CD4-positive, alpha-beta memory T cell (primary cell): ENCODE measurements at regions of chr14 and their contacts with region 1.

Region 1: GRCh38 chr14:61280526-61281185 is 482 bp downstream of the TMEM30B start:
- DNase-seq: peak; percentile 73 to 81 (median 78)
- H3K4me3 ChIP-seq: peak overlapping the region; percentile 45 to 76
- H3K4me3 Mint-ChIP-seq: peak overlapping the region; percentile 90 to 95 (median 93)
- H3K27ac ChIP-seq: peak overlapping the region; percentile 65
- H3K27ac Mint-ChIP-seq: peak overlapping the region; percentile 87 to 96 (median 94)
- H3K4me1 ChIP-seq: peaks cover 16% of the 10 kb centered on the region
- H3K4me1 Mint-ChIP-seq: peaks cover 19 to 38% (median 24%) of the 10 kb centered on the region in 4 donors
- H3K27me3 ChIP-seq: no peaks in the 10 kb centered on the region
- H3K27me3 Mint-ChIP-seq: no peaks in the 10 kb centered on the region

Region 2: GRCh38 chr14:61154641-61155040 is 126.0 kb before region 1 on chr14:
- CTCF ChIA-PET with region 1: no interaction called
- POLR2A ChIA-PET with region 1: no interaction called
- intact Hi-C with region 1: no loop called
- DNase-seq: no peak
- H3K4me3 ChIP-seq: no peak overlapping the region
- H3K4me3 Mint-ChIP-seq: no peak overlapping the region
- H3K27ac ChIP-seq: no peak overlapping the region
- H3K27ac Mint-ChIP-seq: no peak overlapping the region
- H3K4me1 ChIP-seq: no peaks in the 10 kb centered on the region
- H3K4me1 Mint-ChIP-seq: no peaks in the 10 kb centered on the region
- H3K27me3 ChIP-seq: no peaks in the 10 kb centered on the region
- H3K27me3 Mint-ChIP-seq: peaks cover 5 to 12% of the 10 kb centered on the region in 2 donors

Region 3: GRCh38 chr14:61269321-61270083 is 11.2 kb before region 1 on chr14:
- CTCF ChIA-PET with region 1: interaction called, 152 read pairs
- POLR2A ChIA-PET with region 1: interaction called, 6 read pairs
- intact Hi-C with region 1: loop called (anchors 1 kb)
- DNase-seq: peak; percentile 71 to 77 (median 74)
- H3K4me3 ChIP-seq: peak overlapping the region in 1 of 2 donors; percentile 29
- H3K4me3 Mint-ChIP-seq: peak overlapping the region in 7 of 8 donors; percentile 58 to 83 (median 79)
- H3K27ac ChIP-seq: no peak overlapping the region
- H3K27ac Mint-ChIP-seq: no peak overlapping the region
- H3K4me1 ChIP-seq: peaks cover 5% of the 10 kb centered on the region
- H3K4me1 Mint-ChIP-seq: peaks cover 0 to 7% (median 2%) of the 10 kb centered on the region in 4 donors
- H3K27me3 ChIP-seq: peaks cover 5% of the 10 kb centered on the region
- H3K27me3 Mint-ChIP-seq: peaks cover 24 to 30% of the 10 kb centered on the region in 2 donors

Region 4: DNA sequence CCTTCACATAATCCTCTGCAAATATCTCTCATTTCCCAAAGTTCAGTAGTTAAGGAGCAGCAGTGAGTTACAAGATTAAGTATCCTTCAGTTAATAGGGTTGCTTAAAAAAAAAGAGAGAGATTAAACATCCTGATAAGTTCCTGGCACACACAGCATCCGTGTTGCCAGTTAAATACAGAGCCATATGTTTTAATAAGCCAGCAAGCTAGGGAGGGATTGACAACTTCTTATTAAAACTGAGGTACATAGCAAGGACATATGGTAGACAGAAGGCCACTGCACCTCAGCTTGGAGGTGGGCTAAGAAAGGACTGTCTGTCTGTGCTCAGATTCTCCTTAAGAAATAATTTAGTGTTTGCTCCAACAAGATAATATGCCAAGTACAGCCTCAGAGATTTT is 10.0 kb after region 1 on chr14:
- CTCF ChIA-PET with region 1: interaction called, 36 read pairs
- POLR2A ChIA-PET with region 1: interaction called, 6 read pairs
- intact Hi-C with region 1: no loop called
- DNase-seq: no peak
- H3K4me3 ChIP-seq: no peak overlapping the region
- H3K4me3 Mint-ChIP-seq: no peak overlapping the region
- H3K27ac ChIP-seq: no peak overlapping the region
- H3K27ac Mint-ChIP-seq: no peak overlapping the region
- H3K4me1 ChIP-seq: peaks cover 7% of the 10 kb centered on the region
- H3K4me1 Mint-ChIP-seq: peaks cover 3 to 7% (median 5%) of the 10 kb centered on the region in 4 donors
- H3K27me3 ChIP-seq: no peaks in the 10 kb centered on the region
- H3K27me3 Mint-ChIP-seq: no peaks in the 10 kb centered on the region

Region 5: GRCh38 chr14:61335671-61336275 is 55.1 kb after region 1 on chr14:
- CTCF ChIA-PET with region 1: interaction called, 4 read pairs
- POLR2A ChIA-PET with region 1: interaction called, 11 read pairs
- intact Hi-C with region 1: no loop called
- DNase-seq: peak; percentile 65 to 78 (median 73)
- H3K4me3 ChIP-seq: peak overlapping the region; percentile 2 to 25
- H3K4me3 Mint-ChIP-seq: peak overlapping the region; percentile 78 to 87 (median 84)
- H3K27ac ChIP-seq: peak overlapping the region; percentile 84
- H3K27ac Mint-ChIP-seq: peak overlapping the region; percentile 93 to 100 (median 99)
- H3K4me1 ChIP-seq: peaks cover 94% of the 10 kb centered on the region
- H3K4me1 Mint-ChIP-seq: peaks cover 70 to 85% (median 78%) of the 10 kb centered on the region in 4 donors
- H3K27me3 ChIP-seq: no peaks in the 10 kb centered on the region
- H3K27me3 Mint-ChIP-seq: no peaks in the 10 kb centered on the region

Region 6: DNA sequence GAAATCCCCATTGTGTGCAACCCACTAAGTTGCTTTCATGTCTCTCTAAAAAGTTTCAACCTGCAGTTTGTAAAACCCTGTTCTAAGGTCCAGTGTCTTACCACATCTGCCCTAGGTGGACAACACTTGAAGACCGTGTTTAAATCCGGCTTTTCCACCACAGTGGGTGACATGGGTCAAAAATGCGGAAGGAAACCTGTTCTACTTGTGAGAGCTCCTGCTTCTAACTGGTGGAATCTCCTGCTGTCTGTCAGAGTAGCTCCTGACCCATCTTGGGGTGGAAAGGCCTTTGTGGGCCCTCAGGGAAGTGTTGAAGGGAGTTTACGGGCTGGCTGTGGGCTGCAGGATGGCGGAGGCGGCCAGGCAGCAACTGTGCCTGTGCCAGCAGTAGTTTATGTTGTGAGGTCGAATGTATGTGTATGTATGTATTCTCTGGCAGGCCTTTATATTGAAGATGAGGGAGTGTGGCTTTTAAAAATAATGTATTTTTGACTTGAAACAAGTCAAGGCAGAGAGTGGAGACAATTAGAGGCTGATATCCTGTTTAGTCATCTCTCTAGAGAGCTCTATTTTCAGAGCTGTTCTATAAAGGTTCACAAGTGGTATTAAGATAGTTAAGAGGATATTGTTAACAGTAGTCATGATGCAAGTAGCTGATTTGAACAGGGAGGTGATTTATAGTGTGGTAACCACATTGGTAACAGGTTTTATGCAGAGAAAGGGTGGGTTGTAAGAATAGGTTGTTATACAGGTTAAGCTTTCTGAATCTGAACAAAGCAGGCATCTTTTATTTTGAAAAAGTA is 107.7 kb after region 1 on chr14:
- CTCF ChIA-PET with region 1: interaction called, 4 read pairs
- POLR2A ChIA-PET with region 1: interaction called, 13 read pairs
- intact Hi-C with region 1: no loop called
- DNase-seq: peak; percentile 50 to 69 (median 61)
- H3K4me3 ChIP-seq: peak overlapping the region in 1 of 2 donors; percentile 26
- H3K4me3 Mint-ChIP-seq: peak overlapping the region in 2 of 8 donors; percentile 72 to 78
- H3K27ac ChIP-seq: peak overlapping the region; percentile 65
- H3K27ac Mint-ChIP-seq: no peak overlapping the region
- H3K4me1 ChIP-seq: peaks cover 100% of the 10 kb centered on the region
- H3K4me1 Mint-ChIP-seq: peaks cover 0 to 50% (median 20%) of the 10 kb centered on the region in 4 donors
- H3K27me3 ChIP-seq: no peaks in the 10 kb centered on the region
- H3K27me3 Mint-ChIP-seq: no peaks in the 10 kb centered on the region

Region 7: GRCh38 chr14:61730756-61731373 is 450.2 kb after region 1 on chr14:
- CTCF ChIA-PET with region 1: interaction called, 3 read pairs
- POLR2A ChIA-PET with region 1: no interaction called
- intact Hi-C with region 1: loop called (anchors 5 kb)
- DNase-seq: peak in 4 of 5 donors; percentile 30 to 34 (median 30)
- H3K4me3 ChIP-seq: no peak overlapping the region
- H3K4me3 Mint-ChIP-seq: no peak overlapping the region
- H3K27ac ChIP-seq: no peak overlapping the region
- H3K27ac Mint-ChIP-seq: peak overlapping the region in 6 of 7 donors; percentile 2 to 83 (median 52)
- H3K4me1 ChIP-seq: peaks cover 5% of the 10 kb centered on the region
- H3K4me1 Mint-ChIP-seq: peaks cover 10 to 16% (median 12%) of the 10 kb centered on the region in 4 donors
- H3K27me3 ChIP-seq: no peaks in the 10 kb centered on the region
- H3K27me3 Mint-ChIP-seq: no peaks in the 10 kb centered on the region

Region 8: GRCh38 chr14:61761959-61762786 is 481.5 kb after region 1 on chr14 and contains the start of gene SNAPC1:
- CTCF ChIA-PET with region 1: no interaction called
- POLR2A ChIA-PET with region 1: interaction called, 14 read pairs
- intact Hi-C with region 1: no loop called
- DNase-seq: peak; percentile 96 to 98 (median 97)
- H3K4me3 ChIP-seq: peak within 1 kb of the TSS; percentile 80 to 85
- H3K4me3 Mint-ChIP-seq: peak within 1 kb of the TSS; percentile 96 to 100 (median 99)
- H3K27ac ChIP-seq: peak within 1 kb of the TSS; percentile 90
- H3K27ac Mint-ChIP-seq: peak within 1 kb of the TSS; percentile 99 to 100 (median 100)
- H3K4me1 ChIP-seq: peaks cover 38% of the 10 kb centered on the region
- H3K4me1 Mint-ChIP-seq: peaks cover 25 to 54% (median 31%) of the 10 kb centered on the region in 4 donors
- H3K27me3 ChIP-seq: no peaks in the 10 kb centered on the region
- H3K27me3 Mint-ChIP-seq: no peaks in the 10 kb centered on the region
- total RNA-seq, gene SNAPC1: 4.0 to 4.2 TPM